ENCODE measurements at regions of chr15 and their contacts with region 1.

Region 1: DNA sequence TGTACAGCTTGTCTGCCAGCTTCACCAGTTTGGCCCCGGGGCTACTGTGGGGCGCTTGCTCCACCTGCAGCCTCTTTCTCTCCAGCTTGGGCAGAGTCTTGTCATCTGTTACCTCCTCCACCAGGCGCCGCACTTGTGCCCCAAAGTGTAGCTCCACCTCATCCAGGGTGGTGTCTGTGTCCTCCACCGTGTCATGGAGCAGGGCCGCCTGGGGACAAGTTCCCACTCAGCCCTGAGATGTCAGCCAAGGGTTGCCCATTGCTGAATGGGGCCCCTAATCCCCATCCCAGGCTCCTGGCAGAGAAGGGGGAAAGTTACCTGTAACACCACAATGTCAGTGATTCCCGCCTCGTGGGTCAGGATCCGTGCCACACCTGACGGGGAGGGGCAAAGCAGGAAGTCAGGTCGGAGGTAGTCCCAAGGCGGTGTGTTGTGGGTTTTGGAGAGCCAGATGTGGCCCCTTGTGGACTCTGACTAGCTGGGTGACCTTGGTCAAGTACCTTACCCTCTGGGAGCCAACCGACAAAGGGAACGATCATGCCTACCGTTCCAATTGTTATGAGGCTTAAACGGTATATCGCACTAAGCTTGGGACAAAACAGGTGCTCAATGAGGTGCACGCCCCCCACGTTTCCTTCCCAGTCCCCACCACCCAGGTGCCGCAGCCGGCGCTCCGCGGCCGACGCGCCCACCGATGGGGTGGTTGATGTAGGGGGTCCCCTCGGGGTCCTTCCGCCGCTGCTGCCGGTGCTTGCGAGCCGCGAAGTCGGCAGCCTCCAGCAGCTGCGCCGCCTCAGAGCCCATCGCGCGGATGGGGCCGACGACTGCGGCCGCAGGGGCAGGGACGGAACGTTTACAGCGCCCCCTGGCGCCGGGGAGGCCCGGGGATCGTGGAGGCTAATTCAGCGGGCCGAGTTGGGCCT is at the start of gene HDDC3:
- DNase-seq: peak; percentile 54 to 95
- H3K4me3 ChIP-seq: peak within 1 kb of the TSS; percentile 72 to 80
- H3K27ac ChIP-seq: peak within 1 kb of the TSS; percentile 84 to 88
- H3K4me1 ChIP-seq: peaks cover 12 to 33% of the 10 kb centered on the region in 2 donors
- H3K27me3 ChIP-seq: no peaks in the 10 kb centered on the region
- CTCF ChIP-seq: peak; percentile 88 to 91 (median 89)
- total RNA-seq, gene HDDC3: 29.4 TPM

Region 2: DNA sequence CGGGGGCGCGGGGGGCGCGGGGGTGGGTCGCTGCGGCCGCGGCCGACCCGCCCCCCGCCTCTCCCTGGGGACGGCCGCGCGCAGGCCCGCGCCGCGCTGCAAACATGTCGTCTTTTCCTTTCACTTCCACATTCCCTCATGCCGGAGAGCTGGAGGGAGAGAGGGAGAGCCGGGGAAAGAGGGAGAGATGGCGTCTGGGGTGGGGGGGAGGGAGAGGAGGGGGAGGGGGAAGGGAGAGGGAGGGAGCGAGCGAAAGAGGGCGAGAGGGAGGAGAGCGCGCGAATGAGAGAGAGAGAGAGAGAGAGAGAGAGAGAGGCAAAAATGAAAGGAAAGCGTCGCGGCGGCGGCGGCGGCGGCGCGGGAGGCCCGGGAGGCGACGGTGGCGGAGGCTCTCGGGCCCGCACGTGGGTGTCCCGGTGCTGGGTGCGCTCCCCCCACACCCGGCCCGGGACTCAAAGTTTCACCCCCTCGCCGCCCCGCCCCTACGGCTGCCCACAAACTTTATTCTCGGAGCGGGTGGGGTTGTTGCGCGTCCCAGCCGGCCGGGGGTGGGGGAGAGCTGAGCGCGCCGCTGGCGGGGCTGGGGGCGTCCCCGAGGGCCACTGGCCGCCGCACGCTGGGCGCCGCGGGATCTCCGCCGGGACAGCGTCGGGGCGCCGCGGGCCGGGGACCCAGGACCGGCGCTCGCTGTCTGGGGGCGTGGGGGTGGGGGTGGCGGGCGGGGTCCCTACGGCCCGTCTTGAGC is 930.1 kb before region 1 on chr15:
- intact Hi-C with region 1: loop called (anchors 10 kb)
- DNase-seq: peak in 1 of 2 donors; percentile 76
- H3K4me3 ChIP-seq: peak overlapping the region; percentile 86 to 96
- H3K27ac ChIP-seq: peak overlapping the region; percentile 81 to 90
- H3K4me1 ChIP-seq: peaks cover 0 to 34% of the 10 kb centered on the region in 2 donors
- H3K27me3 ChIP-seq: no peaks in the 10 kb centered on the region
- CTCF ChIP-seq: no peak

Region 3: DNA sequence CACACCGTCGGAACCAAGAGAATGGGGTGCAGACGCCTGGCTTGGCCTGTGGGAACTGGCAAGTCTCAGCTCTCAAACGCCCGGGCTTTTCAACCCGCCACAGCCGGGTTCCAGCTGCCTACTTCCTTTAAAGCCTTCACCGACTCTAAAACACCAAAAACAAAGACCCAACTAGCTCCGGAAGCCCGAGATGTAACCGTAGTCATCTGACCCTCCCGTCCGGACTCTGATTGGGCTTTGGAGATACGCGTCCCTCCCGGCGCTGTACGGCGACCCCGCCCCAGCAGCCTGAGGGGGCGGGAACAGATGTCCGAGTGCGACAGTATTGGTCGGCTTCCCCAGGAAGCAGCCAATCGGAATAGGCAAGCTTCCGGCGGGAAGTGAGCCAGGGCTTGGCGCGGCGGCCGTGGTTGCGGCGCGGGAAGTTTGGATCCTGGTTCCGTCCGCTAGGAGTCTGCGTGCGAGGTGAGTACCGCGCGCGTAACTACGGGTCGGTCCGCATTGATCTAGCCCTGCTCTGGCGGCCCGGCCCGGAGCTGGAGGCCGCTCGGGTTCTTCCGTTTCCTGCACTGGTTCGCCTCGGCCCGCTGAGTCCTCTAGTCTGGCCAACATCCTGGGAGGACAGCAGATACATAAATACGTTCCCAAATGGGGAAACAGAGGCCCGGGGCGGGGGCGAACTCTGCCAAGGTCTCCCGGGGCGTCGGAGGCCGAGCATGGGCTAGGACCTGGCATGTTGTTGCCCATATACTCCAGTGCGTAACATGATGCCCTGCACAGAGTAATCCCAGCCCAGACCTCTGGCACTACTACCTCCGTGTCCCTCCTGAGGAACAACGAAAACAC is 214.8 kb before region 1 on chr15 and contains the start of gene BLM:
- intact Hi-C with region 1: loop called (anchors 5 kb)
- DNase-seq: peak; percentile 92 to 98
- H3K4me3 ChIP-seq: peak within 1 kb of the TSS; percentile 69
- H3K27ac ChIP-seq: peak within 1 kb of the TSS; percentile 89 to 91
- H3K4me1 ChIP-seq: peaks cover 6 to 7% of the 10 kb centered on the region in 2 donors
- H3K27me3 ChIP-seq: no peaks in the 10 kb centered on the region
- CTCF ChIP-seq: peak in 2 of 3 experiments; percentile 38 to 70
- total RNA-seq, gene BLM: 0.11 TPM

Region 4: DNA sequence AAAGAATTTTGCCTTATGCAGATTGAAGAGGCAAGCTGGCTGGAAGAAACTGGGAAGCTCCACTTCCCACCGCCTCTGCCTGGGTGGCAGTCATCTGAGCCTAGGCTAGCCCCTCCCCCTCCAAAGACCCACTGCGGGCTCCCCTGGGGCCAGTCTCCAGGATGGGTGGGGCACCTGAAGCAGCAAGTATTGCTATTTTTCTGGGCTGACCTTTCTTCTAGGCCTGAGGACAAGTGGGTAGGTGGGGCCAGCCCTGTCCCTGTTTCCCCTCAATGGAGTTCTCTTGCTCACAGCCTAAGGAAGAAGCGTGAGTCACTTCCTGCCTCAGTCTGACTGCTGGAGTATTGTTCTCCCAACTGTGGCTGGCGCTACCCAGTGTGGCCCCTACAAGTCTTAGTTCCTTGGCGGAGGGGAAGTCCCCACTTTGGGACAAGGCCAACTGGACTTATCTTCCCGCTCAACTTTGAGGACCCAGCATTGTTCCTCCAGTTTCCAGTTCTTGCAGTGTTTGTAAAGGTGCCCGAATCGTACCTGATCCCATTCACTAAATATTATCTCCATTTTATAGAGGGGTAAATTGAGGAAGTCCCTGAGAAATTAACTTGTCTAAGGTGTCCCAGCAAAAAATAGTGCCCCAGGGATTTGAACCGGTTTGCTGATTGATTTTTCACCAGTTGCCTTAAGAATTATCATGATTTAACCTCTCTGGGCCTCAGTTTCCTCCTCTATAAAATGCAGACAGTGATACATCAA is 62.2 kb before region 1 on chr15:
- intact Hi-C with region 1: loop called (anchors 2 kb)
- DNase-seq: peak; percentile 78 to 92
- H3K4me3 ChIP-seq: no peak overlapping the region
- H3K27ac ChIP-seq: peak overlapping the region; percentile 91 to 95
- H3K4me1 ChIP-seq: peaks cover 10 to 36% of the 10 kb centered on the region in 2 donors
- H3K27me3 ChIP-seq: no peaks in the 10 kb centered on the region
- CTCF ChIP-seq: no peak

Region 5: GRCh38 chr15:90902040-90902839 is 29.8 kb before region 1 on chr15:
- intact Hi-C with region 1: loop called (anchors 1 kb)
- DNase-seq: peak in 1 of 2 donors; percentile 85
- H3K4me3 ChIP-seq: peak overlapping the region; percentile 82 to 89
- H3K27ac ChIP-seq: peak overlapping the region; percentile 82 to 96
- H3K4me1 ChIP-seq: peaks cover 0 to 12% of the 10 kb centered on the region in 2 donors
- H3K27me3 ChIP-seq: no peaks in the 10 kb centered on the region
- CTCF ChIP-seq: peak; percentile 72 to 86 (median 82)

Region 6: DNA sequence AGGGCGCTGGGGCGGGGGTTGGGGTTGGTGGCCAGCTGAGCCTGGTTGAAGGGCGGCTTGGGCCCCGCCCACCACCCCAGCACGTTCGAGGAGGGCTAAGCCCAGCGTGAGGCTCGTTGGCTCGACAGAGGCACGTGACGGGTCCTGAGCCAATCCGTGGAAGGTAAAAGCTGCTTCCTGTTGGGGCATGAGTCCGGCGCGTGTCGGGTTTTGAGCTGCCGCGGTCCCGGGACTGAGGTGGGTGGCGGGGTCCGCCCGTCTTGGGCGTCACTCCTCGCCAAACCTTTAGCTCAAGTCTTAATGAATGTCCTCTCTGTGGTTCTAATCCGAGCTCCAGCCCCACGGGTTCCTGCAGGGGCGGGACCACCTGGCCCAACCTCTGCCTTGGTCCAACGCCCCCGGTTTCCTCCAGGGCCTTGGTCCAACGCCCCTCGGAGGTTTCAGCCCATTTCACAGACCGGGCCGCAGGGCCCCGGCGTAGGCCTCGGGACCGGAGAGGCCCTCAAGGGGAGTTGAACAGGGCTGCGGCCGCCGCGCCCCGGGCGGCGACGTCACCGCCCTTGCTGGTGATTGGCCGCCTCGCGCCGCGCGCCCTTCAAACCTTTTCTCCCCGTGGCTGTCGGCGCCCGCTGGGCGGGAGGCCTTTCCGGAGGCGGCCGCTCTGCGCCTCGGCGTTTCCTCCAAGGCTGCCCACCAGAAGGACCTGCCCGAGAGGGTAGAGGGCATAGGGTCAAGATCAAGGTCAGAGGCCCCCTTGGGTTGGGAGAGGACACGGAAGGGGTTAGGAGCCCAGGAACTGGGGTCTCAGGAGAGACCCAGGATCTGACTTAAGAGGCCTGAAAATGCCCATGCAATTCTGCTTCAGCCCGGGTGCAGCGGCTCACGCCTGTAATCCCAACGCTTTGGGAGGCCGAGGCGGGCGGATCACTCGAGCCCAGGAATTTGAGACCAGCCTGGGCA is 23.0 kb after region 1 on chr15 and contains the start of gene RCCD1:
- intact Hi-C with region 1: loop called (anchors 2 kb)
- DNase-seq: peak; percentile 84 to 97
- H3K4me3 ChIP-seq: peak within 1 kb of the TSS; percentile 75 to 80
- H3K27ac ChIP-seq: peak within 1 kb of the TSS; percentile 82 to 96
- H3K4me1 ChIP-seq: peaks cover 5 to 32% of the 10 kb centered on the region in 2 donors
- H3K27me3 ChIP-seq: no peaks in the 10 kb centered on the region
- CTCF ChIP-seq: peak in 1 of 3 experiments; percentile 6
- total RNA-seq, gene RCCD1: 10.0 TPM